ENCODE measurements at regions of chr3 and their contacts with region 1.

Region 1: GRCh38 chr3:53709860-53710674 is 136.2 kb downstream of the CHDH start:
- DNase-seq: peak; percentile 29 to 69 (median 45)
- ATAC-seq: peak; percentile 55
- H3K4me3 ChIP-seq: no peak overlapping the region
- H3K4me3 Mint-ChIP-seq: no peak overlapping the region
- H3K27ac ChIP-seq: no peak overlapping the region
- H3K27ac Mint-ChIP-seq: no peak overlapping the region
- H3K4me1 ChIP-seq: no peaks in the 10 kb centered on the region
- H3K4me1 Mint-ChIP-seq: peaks cover 2% of the 10 kb centered on the region
- H3K27me3 ChIP-seq: no peaks in the 10 kb centered on the region
- H3K27me3 Mint-ChIP-seq: no peaks in the 10 kb centered on the region
- CTCF ChIP-seq: peak; percentile 59

Region 2: GRCh38 chr3:53114011-53114400 is 596.1 kb before region 1 on chr3:
- CTCF ChIA-PET with region 1: interaction called, 8 read pairs
- POLR2A ChIA-PET with region 1: no interaction called
- intact Hi-C with region 1: loop called in 1 of 2 experiments (anchors 1 kb)
- DNase-seq: peak; percentile 67 to 88 (median 84)
- ATAC-seq: peak; percentile 89
- H3K4me3 ChIP-seq: no peak overlapping the region
- H3K4me3 Mint-ChIP-seq: no peak overlapping the region
- H3K27ac ChIP-seq: peak overlapping the region in 1 of 2 experiments; percentile 15
- H3K27ac Mint-ChIP-seq: no peak overlapping the region
- H3K4me1 ChIP-seq: no peaks in the 10 kb centered on the region
- H3K4me1 Mint-ChIP-seq: peaks cover 8% of the 10 kb centered on the region
- H3K27me3 ChIP-seq: no peaks in the 10 kb centered on the region
- H3K27me3 Mint-ChIP-seq: no peaks in the 10 kb centered on the region
- CTCF ChIP-seq: peak; percentile 89

Region 3: GRCh38 chr3:53219895-53220483 is 490.1 kb before region 1 on chr3:
- CTCF ChIA-PET with region 1: interaction called, 3 read pairs
- POLR2A ChIA-PET with region 1: no interaction called
- intact Hi-C with region 1: loop called in 1 of 2 experiments (anchors 1 kb)
- DNase-seq: peak; percentile 52 to 85 (median 76)
- ATAC-seq: peak; percentile 93
- H3K4me3 ChIP-seq: no peak overlapping the region
- H3K4me3 Mint-ChIP-seq: no peak overlapping the region
- H3K27ac ChIP-seq: no peak overlapping the region
- H3K27ac Mint-ChIP-seq: no peak overlapping the region
- H3K4me1 ChIP-seq: no peaks in the 10 kb centered on the region
- H3K4me1 Mint-ChIP-seq: peaks cover 3% of the 10 kb centered on the region
- H3K27me3 ChIP-seq: no peaks in the 10 kb centered on the region
- H3K27me3 Mint-ChIP-seq: no peaks in the 10 kb centered on the region
- CTCF ChIP-seq: peak; percentile 92

Region 4: GRCh38 chr3:53303957-53304356 is 406.1 kb before region 1 on chr3:
- CTCF ChIA-PET with region 1: interaction called, 25 read pairs
- POLR2A ChIA-PET with region 1: no interaction called
- intact Hi-C with region 1: loop called in 1 of 2 experiments (anchors 1 kb)
- DNase-seq: no peak
- ATAC-seq: no peak
- H3K4me3 ChIP-seq: no peak overlapping the region
- H3K4me3 Mint-ChIP-seq: no peak overlapping the region
- H3K27ac ChIP-seq: no peak overlapping the region
- H3K27ac Mint-ChIP-seq: no peak overlapping the region
- H3K4me1 ChIP-seq: no peaks in the 10 kb centered on the region
- H3K4me1 Mint-ChIP-seq: no peaks in the 10 kb centered on the region
- H3K27me3 ChIP-seq: no peaks in the 10 kb centered on the region
- H3K27me3 Mint-ChIP-seq: no peaks in the 10 kb centered on the region
- CTCF ChIP-seq: no peak

Region 5: DNA sequence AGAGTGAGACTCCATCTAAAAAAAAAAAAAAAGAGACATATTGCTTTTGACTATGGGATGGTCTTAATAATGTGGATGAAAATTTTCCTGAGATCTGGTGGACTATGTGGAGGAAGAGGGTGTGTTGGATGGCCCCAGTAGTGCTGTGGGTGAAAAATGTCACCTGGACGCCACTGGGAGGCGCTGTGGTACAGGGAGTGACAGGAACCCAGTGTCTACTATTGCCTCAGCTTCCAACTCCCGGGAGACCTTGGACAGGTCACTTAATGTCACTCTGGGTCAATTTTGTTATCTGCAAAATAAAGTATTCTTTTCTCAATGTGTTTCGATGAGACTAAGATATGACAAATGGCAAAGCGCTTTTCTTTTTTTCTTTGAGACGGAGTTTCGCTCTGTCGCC is 335.0 kb before region 1 on chr3:
- CTCF ChIA-PET with region 1: no interaction called
- POLR2A ChIA-PET with region 1: no interaction called
- intact Hi-C with region 1: loop called in 1 of 2 experiments (anchors 2 kb)
- DNase-seq: peak; percentile 3 to 53 (median 28)
- ATAC-seq: no peak
- H3K4me3 ChIP-seq: no peak overlapping the region
- H3K4me3 Mint-ChIP-seq: no peak overlapping the region
- H3K27ac ChIP-seq: no peak overlapping the region
- H3K27ac Mint-ChIP-seq: no peak overlapping the region
- H3K4me1 ChIP-seq: no peaks in the 10 kb centered on the region
- H3K4me1 Mint-ChIP-seq: no peaks in the 10 kb centered on the region
- H3K27me3 ChIP-seq: peaks cover 0 to 2% of the 10 kb centered on the region in 2 experiments
- H3K27me3 Mint-ChIP-seq: peaks cover 35% of the 10 kb centered on the region
- CTCF ChIP-seq: peak; percentile 33

Region 6: GRCh38 chr3:53696401-53697150 is 13.5 kb before region 1 on chr3:
- CTCF ChIA-PET with region 1: interaction called, 27 read pairs
- POLR2A ChIA-PET with region 1: no interaction called
- intact Hi-C with region 1: no loop called
- DNase-seq: no peak
- ATAC-seq: no peak
- H3K4me3 ChIP-seq: no peak overlapping the region
- H3K4me3 Mint-ChIP-seq: no peak overlapping the region
- H3K27ac ChIP-seq: no peak overlapping the region
- H3K27ac Mint-ChIP-seq: no peak overlapping the region
- H3K4me1 ChIP-seq: no peaks in the 10 kb centered on the region
- H3K4me1 Mint-ChIP-seq: no peaks in the 10 kb centered on the region
- H3K27me3 ChIP-seq: no peaks in the 10 kb centered on the region
- H3K27me3 Mint-ChIP-seq: peaks cover 11% of the 10 kb centered on the region
- CTCF ChIP-seq: no peak

Region 7: DNA sequence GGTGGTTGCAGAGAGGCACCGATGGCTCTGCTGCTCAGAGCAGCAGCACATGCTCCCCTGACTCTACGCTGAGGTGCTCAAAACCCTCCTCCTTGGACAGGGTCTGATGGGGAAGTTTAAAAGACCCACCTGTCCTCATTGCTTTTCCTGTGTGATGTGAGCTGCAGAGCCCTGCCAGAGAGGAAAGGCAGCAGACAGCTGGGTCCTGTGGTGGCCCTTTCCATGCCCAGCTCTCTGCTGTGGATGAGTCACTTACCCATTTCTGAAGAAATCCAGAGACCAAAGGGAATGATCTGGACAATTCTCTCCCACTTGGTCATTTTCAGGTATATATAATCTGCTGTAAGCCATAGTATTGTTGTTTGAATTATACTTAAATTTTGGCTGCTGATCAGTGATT is 14.5 kb after region 1 on chr3:
- CTCF ChIA-PET with region 1: interaction called, 12 read pairs
- POLR2A ChIA-PET with region 1: interaction called, 3 read pairs
- intact Hi-C with region 1: no loop called
- DNase-seq: no peak
- ATAC-seq: no peak
- H3K4me3 ChIP-seq: no peak overlapping the region
- H3K4me3 Mint-ChIP-seq: no peak overlapping the region
- H3K27ac ChIP-seq: no peak overlapping the region
- H3K27ac Mint-ChIP-seq: no peak overlapping the region
- H3K4me1 ChIP-seq: no peaks in the 10 kb centered on the region
- H3K4me1 Mint-ChIP-seq: no peaks in the 10 kb centered on the region
- H3K27me3 ChIP-seq: peaks cover 0 to 3% of the 10 kb centered on the region in 2 experiments
- H3K27me3 Mint-ChIP-seq: peaks cover 30% of the 10 kb centered on the region
- CTCF ChIP-seq: no peak

Measured in CD8-positive, alpha-beta T cell (primary cell).